ENCODE measurements at regions of chr6 and their contacts with region 1.

Region 1: DNA sequence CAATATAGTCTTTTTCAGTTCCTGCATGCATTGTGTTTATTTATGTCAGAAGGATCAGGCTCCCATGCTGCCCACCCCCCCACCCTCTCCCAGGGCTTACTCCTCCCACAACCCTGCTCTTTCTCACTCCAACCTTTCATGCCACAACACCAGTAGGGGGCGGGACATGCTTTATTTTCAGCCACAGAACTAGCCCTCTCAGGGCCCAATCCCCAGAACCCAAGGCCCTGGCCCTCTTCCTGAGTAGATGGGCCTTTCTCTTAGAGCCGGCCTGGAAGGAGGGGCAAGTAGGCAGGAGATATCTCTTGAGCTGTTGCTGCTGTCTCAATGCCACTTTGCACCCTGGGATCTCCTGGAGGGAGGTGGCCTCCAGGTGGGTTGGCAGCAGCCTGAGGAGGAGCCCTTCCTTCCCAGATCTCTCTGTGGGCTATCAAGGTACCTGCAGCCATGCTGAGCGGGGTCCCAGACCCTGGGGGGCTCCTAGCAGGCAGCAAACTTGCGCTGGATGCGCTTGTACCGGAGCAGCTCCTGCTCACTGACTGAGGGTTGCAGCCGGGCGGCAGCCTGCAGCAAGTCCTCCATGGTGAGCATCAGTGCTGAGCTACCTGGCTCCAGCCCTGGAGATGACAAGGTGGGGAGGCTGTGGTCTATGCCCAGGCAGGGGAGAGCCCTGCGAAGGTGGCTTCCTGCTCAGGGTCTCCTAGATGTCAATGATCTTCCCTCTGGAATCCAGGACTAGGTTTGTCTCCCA is 3.5 kb downstream of the GNMT start:
- DNase-seq: peak; percentile 44 to 68 (median 66)
- H3K4me3 ChIP-seq: no peak overlapping the region
- H3K27ac ChIP-seq: no peak overlapping the region
- H3K4me1 ChIP-seq: peaks cover 0 to 17% (median 11%) of the 10 kb centered on the region in 4 experiments
- H3K27me3 ChIP-seq: peaks cover 0 to 16% (median 3%) of the 10 kb centered on the region in 5 experiments

Region 2: GRCh38 chr6:42520786-42521607 is 443.0 kb before region 1 on chr6:
- CTCF ChIA-PET with region 1: no interaction called
- POLR2A ChIA-PET with region 1: no interaction called
- DNase-seq: peak; percentile 55 to 93 (median 89)
- H3K4me3 ChIP-seq: peak overlapping the region in 3 of 7 experiments; percentile 6 to 39 (median 23)
- H3K27ac ChIP-seq: no peak overlapping the region
- H3K4me1 ChIP-seq: peaks cover 7 to 15% (median 13%) of the 10 kb centered on the region in 4 experiments
- H3K27me3 ChIP-seq: no peaks in the 10 kb centered on the region

Region 3: DNA sequence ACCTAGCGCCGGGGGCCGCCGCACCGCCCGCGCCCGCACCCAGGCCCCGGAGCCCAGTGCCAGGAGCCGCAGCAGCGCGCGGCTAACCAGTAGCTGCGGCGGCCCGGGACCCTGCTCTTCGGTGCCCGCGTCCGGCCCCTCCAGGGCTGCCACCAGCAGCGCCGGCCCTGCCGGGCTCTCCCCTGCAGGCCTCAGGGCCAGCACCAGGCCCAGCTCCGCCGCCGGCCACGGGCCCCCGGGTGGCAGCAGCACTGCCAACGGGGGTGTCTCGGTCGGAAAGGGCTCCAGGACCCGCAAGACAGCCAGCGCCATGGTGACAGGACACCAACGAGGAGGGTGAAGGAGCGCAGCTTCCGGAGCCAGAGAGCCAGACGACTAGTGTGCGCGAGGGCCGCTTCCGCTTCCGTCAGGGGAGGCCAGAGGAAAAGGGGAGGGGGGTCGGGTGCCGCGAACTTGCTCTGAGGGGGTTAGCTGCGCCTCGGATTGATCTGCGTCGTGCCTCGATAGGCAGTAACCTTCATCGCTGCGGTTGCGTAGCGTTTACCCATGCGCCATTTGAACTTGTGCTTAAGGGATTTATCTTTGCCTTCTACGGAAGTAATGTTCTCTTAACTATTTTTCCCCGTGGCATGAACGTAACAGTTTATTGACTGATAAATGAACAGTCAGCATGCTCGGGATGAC is 15.0 kb after region 1 on chr6 and contains the start of gene PEX6:
- CTCF ChIA-PET with region 1: interaction called, 15 read pairs
- POLR2A ChIA-PET with region 1: no interaction called
- DNase-seq: peak; percentile 92 to 95 (median 94)
- H3K4me3 ChIP-seq: peak within 1 kb of the TSS; percentile 80 to 97 (median 91)
- H3K27ac ChIP-seq: peak within 1 kb of the TSS; percentile 66 to 88
- H3K4me1 ChIP-seq: peaks cover 9 to 25% (median 24%) of the 10 kb centered on the region in 4 experiments
- H3K27me3 ChIP-seq: no peaks in the 10 kb centered on the region

Region 4: GRCh38 chr6:43013843-43014433 is 49.9 kb after region 1 on chr6 and contains the starts of genes KLHDC3 and MEA1:
- CTCF ChIA-PET with region 1: interaction called, 12 read pairs
- POLR2A ChIA-PET with region 1: no interaction called
- DNase-seq: peak; percentile 100
- H3K4me3 ChIP-seq: peak within 1 kb of the TSS; percentile 74 to 96 (median 90)
- H3K27ac ChIP-seq: peak within 1 kb of the TSS; percentile 52 to 87
- H3K4me1 ChIP-seq: peaks cover 11 to 40% (median 31%) of the 10 kb centered on the region in 4 experiments
- H3K27me3 ChIP-seq: no peaks in the 10 kb centered on the region

Measured in common myeloid progenitor, CD34-positive (primary cell).